ENCODE measurements at regions of chr1 and their contacts with region 1.

Region 1: GRCh38 chr1:161738627-161739287 is 10.8 kb upstream of the DUSP12 start:
- DNase-seq: peak; percentile 7 to 35
- ATAC-seq: peak in 1 of 2 donors; percentile 27
- H3K4me3 ChIP-seq: no peak overlapping the region
- H3K27ac ChIP-seq: no peak overlapping the region
- H3K4me1 ChIP-seq: peaks cover 0 to under 1% of the 10 kb centered on the region in 2 donors
- H3K27me3 ChIP-seq: no peaks in the 10 kb centered on the region
- CTCF ChIP-seq: peak in 1 of 5 experiments; percentile 17
- POLR2A ChIP-seq: no peak

Region 2: DNA sequence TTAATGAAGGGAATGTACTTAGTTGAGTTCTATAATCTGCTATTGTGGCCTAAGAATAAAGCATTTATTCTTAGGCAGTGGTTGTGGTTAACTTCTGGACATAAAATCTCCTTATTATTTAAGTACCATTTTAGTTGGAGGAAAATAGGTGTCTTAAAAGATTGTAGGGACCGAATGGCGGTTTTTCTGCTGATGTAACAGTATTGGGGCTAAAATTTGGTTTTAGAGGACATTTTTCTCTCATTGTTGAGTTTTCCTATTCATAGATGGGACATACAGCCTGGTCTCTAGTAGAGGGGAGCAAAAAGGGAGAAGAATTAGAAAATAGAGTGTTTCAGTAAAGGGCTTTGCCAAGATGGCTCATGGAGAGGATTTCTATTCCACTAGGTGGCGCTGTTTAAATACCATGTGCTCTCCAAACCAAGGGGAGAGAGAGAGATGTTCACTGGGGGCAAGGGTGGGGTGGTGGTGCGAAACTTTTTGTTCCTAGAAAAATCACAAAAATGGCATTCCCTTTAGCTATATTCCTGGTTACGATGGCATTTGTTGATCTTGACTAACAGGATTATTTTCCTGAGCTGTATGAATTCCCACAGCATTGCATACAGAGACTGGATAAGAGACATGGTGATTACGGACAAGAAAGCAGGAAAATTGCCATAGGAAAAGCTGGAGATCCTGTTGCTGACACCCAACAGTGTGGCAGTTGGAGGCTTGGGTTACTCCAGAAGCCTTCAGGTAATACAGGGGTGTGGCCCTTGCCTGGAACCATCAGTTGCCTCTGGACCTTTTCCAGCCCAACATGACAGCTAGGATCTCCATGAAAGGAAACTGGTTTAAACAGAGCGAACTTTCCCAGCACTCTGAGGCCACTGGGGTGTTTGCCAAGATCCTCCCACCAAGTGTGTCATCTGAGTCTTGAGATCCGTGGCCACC is 251.7 kb before region 1 on chr1:
- in situ Hi-C with region 1: loop called in 3 of 4 experiments (anchors 10 kb)
- intact Hi-C with region 1: loop called (anchors 1 kb)
- DNase-seq: peak; percentile 14 to 27
- ATAC-seq: peak; percentile 56 to 64
- H3K4me3 ChIP-seq: no peak overlapping the region
- H3K27ac ChIP-seq: no peak overlapping the region
- H3K4me1 ChIP-seq: no peaks in the 10 kb centered on the region
- H3K27me3 ChIP-seq: peaks cover 9 to 31% (median 10%) of the 10 kb centered on the region in 3 donors
- CTCF ChIP-seq: peak; percentile 30 to 76 (median 54)
- POLR2A ChIP-seq: no peak

Region 3: DNA sequence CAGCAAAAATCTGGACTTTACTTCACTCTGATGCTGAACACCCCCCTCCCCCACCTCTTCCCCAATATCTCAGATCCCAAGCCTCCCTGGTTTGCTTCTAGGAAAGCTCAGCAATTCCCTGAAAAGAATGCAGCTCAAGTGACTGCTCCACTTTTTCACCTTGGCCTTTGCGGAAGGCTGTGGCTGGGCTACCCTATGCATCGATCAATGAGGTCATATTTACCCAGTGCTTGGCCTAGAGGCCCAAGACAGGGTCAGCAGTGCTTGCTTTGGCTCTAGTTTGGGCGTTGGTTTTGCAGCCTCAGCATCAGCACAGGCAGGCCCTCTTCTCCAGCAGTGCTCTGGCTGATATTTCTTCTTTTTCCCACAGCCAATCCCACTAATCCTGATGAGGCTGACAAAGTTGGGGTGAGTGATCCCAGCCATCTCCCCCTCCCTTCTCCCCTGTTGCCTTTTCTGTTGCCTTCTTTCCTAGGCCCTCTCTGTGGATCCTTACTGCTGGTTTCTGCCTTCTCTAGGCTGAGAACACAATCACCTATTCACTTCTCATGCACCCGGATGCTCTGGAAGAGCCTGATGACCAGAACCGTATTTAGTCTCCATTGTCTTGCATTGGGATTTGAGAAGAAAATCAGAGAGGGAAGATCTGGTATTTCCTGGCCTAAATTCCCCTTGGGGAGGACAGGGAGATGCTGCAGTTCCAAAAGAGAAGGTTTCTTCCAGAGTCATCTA is 61.6 kb before region 1 on chr1:
- in situ Hi-C with region 1: no loop called
- intact Hi-C with region 1: no loop called
- DNase-seq: no peak
- ATAC-seq: no peak
- H3K4me3 ChIP-seq: no peak overlapping the region
- H3K27ac ChIP-seq: no peak overlapping the region
- H3K4me1 ChIP-seq: no peaks in the 10 kb centered on the region
- H3K27me3 ChIP-seq: no peaks in the 10 kb centered on the region
- CTCF ChIP-seq: no peak
- POLR2A ChIP-seq: no peak